Right ventricle myocardium inferior (tissue), 1 donor: ENCODE measurements at regions of chr3 and their contacts with region 1.

Region 1: DNA sequence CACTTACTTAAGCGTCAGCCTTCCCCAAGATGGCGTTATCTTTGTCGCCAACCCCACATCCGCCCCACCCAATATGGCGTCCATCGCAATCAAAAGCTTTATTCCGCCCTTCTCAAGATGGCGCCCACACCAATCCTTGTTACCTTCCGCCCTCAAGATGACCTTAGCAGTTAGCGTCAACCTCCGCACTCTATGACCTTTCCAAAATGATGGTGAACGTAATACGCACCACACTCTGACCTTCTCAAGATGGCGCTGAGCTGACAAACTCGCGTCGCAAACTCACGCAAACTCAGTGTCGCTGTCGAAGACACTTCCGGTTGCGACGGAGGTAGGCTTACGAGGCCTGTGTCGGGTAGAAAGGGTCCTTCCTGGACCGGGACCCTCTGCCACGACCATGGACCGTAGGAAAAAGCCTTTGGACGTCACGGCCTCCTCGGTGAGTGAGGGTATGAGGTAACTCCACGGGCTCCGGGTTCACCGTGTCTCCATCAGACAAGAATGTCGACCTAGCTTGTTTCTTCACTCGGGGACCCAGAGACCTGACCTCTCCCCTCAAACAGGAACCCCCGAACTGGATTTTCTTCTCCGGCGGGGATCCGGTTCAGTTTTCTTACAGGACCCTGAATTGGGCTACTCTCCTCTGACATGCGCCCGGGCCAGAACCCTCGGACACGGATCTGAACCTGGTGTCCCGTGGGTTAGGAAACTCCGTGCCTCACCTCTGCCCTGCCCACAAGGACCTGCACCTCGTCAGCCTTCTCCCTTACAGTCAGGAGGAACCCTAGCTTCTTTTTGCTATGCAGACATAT is at the start of gene CCDC174:
- DNase-seq: peak; percentile 94
- ATAC-seq: peak; percentile 99
- total RNA-seq, gene CCDC174: 9.7 TPM

Region 2: GRCh38 chr3:14741510-14741909 is 89.9 kb after region 1 on chr3:
- intact Hi-C with region 1: no loop called
- DNase-seq: no peak
- ATAC-seq: no peak

Region 3: DNA sequence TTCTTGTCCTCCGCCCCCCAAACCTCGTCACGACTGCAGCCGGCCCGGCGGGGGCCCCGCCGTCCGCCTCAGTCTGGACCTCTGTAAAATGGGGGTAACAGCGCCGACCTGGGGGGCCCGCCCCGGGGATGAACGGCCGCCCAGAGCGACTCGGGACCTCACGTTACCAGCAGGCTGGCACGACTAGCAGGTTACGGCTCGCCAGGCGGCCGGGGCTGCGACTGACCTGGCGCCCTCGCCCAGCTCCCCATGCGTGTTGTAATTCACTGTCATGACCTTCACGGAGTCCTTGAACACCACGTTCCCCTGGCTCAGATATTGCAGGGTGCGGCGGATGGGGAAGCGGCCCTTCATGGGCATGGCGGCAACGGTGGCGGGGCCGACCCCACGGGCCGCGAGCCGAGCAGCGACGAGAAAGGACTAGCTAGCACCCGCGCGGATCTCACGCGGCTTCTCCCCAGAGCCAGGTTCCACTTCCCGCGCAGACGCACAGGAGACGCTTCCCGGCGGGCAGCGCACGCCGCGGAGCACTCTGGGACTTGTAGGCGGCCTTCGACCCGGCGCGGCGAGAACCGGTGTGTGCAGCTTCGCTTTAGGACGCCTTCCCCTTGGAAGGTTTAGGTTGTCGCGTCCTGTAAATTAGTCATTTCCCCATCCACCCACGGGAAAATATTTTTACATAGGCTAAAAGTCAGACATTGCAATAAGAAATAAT is 413.3 kb after region 1 on chr3 and contains the start of gene MRPS25:
- intact Hi-C with region 1: loop called (anchors 1 kb)
- DNase-seq: peak; percentile 98
- ATAC-seq: peak; percentile 98
- total RNA-seq, gene MRPS25: 140 TPM

Region 4: DNA sequence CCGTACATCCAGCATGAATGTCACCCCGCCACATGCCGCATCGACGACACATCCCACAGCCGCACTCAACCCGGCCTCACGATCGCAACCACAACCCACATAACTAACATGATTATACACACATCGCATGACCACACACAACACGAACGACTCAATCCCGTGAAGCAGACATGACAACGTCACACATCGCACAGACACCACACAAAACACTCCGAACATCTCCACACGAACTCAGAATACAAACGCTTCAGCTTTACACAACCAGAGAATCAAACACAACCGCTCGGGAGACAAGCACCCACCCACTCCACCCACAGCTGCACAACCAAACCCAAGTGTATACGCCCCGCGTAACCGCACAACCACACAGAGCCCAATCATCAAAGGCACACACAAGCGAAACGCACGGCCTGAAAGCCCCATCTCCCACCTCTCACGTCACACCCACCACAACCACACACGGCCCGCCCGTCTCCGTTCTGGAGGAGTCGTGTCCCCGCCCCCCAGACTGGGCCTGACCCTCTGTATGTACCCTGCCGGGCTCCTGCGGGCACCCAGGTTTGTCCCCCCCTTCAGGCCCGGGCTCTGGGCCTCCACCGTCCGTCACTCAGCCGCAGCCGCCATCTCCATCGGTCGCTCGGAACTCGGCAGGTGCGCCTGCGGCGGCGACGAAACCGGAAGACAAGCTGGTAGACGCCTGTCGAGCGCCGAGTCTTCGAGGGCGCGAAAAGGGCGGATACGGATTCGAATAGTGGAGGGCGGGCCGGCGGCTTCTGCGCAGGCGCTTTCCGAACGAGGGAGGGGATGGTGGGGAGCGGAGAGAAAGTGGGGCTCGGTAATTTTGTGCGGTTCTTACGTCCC is 447.1 kb after region 1 on chr3 and contains the start of gene RBSN:
- intact Hi-C with region 1: loop called (anchors 10 kb)
- DNase-seq: peak; percentile 98
- ATAC-seq: peak; percentile 78
- total RNA-seq, gene RBSN: 16.5 TPM